B cell (primary cell): ENCODE measurements at regions of chr19 and their contacts with region 1.

Region 1: GRCh38 chr19:2032296-2032941 is 16.9 kb upstream of the BTBD2 start:
- DNase-seq: peak; percentile 54
- ATAC-seq: peak; percentile 50
- H3K4me3 ChIP-seq: peak overlapping the region in 2 of 5 experiments; percentile 9 to 50
- H3K4me3 Mint-ChIP-seq: peak overlapping the region; percentile 63
- H3K27ac ChIP-seq: peak overlapping the region; percentile 16 to 29
- H3K27ac Mint-ChIP-seq: peak overlapping the region; percentile 62
- H3K4me1 ChIP-seq: peaks cover 17 to 34% of the 10 kb centered on the region in 2 donors
- H3K4me1 Mint-ChIP-seq: peaks cover 26% of the 10 kb centered on the region
- H3K27me3 ChIP-seq: no peaks in the 10 kb centered on the region
- H3K27me3 Mint-ChIP-seq: no peaks in the 10 kb centered on the region
- CTCF ChIP-seq: no peak

Region 2: DNA sequence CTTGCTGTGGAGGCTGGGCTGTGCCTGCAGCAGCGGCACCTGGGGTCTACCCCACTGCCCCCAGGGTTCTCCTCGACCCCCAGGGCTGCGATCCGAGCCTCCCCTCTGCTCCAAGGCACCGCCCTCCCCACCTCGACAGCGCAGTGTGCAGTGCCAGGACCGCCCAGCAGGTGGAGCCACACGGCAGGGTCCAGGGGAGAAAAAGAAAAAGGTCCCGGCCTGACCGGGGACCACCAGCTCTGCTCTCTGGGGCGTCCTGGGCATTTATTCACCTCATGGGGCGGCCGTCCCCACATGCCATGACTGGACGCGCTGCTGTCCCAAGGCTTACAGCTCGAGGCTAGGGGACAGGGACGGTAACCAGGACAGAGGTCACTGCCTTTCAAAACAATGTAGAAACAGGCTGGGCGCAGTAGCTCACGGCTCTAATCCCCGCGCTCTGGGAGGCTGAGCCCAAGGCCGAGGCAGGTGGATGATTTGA is 194.8 kb before region 1 on chr19:
- CTCF ChIA-PET with region 1: no interaction called
- POLR2A ChIA-PET with region 1: no interaction called
- intact Hi-C with region 1: no loop called
- DNase-seq: peak; percentile 66
- ATAC-seq: peak; percentile 85
- H3K4me3 ChIP-seq: no peak overlapping the region
- H3K4me3 Mint-ChIP-seq: no peak overlapping the region
- H3K27ac ChIP-seq: no peak overlapping the region
- H3K27ac Mint-ChIP-seq: no peak overlapping the region
- H3K4me1 ChIP-seq: peaks cover 11 to 12% of the 10 kb centered on the region in 2 donors
- H3K4me1 Mint-ChIP-seq: peaks cover 38% of the 10 kb centered on the region
- H3K27me3 ChIP-seq: no peaks in the 10 kb centered on the region
- H3K27me3 Mint-ChIP-seq: no peaks in the 10 kb centered on the region
- CTCF ChIP-seq: peak; percentile 92

Region 3: GRCh38 chr19:1956868-1957492 is 75.4 kb before region 1 on chr19:
- CTCF ChIA-PET with region 1: no interaction called
- POLR2A ChIA-PET with region 1: no interaction called
- intact Hi-C with region 1: no loop called
- DNase-seq: no peak
- ATAC-seq: no peak
- H3K4me3 ChIP-seq: no peak overlapping the region
- H3K4me3 Mint-ChIP-seq: no peak overlapping the region
- H3K27ac ChIP-seq: no peak overlapping the region
- H3K27ac Mint-ChIP-seq: no peak overlapping the region
- H3K4me1 ChIP-seq: peaks cover 3 to 11% of the 10 kb centered on the region in 2 donors
- H3K4me1 Mint-ChIP-seq: peaks cover 24% of the 10 kb centered on the region
- H3K27me3 ChIP-seq: no peaks in the 10 kb centered on the region
- H3K27me3 Mint-ChIP-seq: no peaks in the 10 kb centered on the region
- CTCF ChIP-seq: no peak

Region 4: DNA sequence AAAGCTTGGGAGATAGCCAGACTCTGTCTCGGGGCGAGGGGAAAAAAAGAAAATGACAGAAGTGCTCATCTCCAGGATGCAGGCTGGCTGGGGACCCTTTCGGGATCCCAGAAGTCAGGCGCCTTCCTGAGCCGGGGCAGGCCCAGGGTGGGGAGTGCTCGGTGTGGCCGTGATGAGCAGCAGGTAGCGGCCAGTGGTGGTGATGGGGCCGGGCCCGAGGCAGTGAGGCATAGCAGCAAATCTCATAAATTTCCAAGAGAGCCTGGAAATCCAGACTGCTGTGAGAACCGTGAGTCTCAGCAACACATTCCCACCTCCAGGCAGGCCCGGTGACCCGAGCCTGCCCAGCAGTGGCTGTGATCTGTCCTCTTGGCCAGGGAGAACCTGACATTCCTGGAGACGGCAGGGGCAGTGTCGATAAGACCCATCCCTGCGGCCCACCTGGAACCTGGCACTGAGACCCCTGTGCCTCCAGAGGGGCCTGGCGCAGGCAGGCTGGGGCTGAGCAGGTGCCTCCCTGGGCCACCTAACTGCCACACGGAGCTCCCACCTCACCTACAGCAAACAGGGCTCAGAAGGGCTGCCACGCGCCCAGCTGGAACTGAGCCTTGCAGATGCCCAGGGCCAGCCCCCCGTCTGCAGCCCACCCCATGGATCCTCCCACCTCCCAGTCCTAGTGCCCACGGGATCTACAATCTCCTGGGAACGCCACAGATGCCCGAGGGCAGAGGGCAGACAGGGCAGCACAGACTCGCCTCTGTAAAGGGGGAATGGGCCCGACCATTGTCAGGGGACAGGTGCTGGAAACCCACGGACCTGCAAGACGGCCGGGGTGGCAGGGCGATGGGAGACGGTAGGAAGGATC is 87.7 kb after region 1 on chr19:
- CTCF ChIA-PET with region 1: no interaction called
- POLR2A ChIA-PET with region 1: interaction called, 10 read pairs
- intact Hi-C with region 1: no loop called
- DNase-seq: no peak
- ATAC-seq: peak; percentile 5
- H3K4me3 ChIP-seq: no peak overlapping the region
- H3K4me3 Mint-ChIP-seq: no peak overlapping the region
- H3K27ac ChIP-seq: no peak overlapping the region
- H3K27ac Mint-ChIP-seq: no peak overlapping the region
- H3K4me1 ChIP-seq: no peaks in the 10 kb centered on the region
- H3K4me1 Mint-ChIP-seq: no peaks in the 10 kb centered on the region
- H3K27me3 ChIP-seq: no peaks in the 10 kb centered on the region
- H3K27me3 Mint-ChIP-seq: no peaks in the 10 kb centered on the region
- CTCF ChIP-seq: no peak

Region 5: GRCh38 chr19:2986951-2987524 is 954.6 kb after region 1 on chr19:
- CTCF ChIA-PET with region 1: no interaction called
- POLR2A ChIA-PET with region 1: interaction called, 10 read pairs
- intact Hi-C with region 1: no loop called
- DNase-seq: no peak
- ATAC-seq: no peak
- H3K4me3 ChIP-seq: no peak overlapping the region
- H3K4me3 Mint-ChIP-seq: no peak overlapping the region
- H3K27ac ChIP-seq: no peak overlapping the region
- H3K27ac Mint-ChIP-seq: no peak overlapping the region
- H3K4me1 ChIP-seq: peaks cover 14 to 22% of the 10 kb centered on the region in 2 donors
- H3K4me1 Mint-ChIP-seq: peaks cover 13% of the 10 kb centered on the region
- H3K27me3 ChIP-seq: peaks cover 0 to 18% (median 2%) of the 10 kb centered on the region in 4 experiments
- H3K27me3 Mint-ChIP-seq: peaks cover 9% of the 10 kb centered on the region
- CTCF ChIP-seq: no peak